Common myeloid progenitor, CD34-positive (primary cell): ENCODE measurements at regions of chr17 and their contacts with region 1.

Region 1: DNA sequence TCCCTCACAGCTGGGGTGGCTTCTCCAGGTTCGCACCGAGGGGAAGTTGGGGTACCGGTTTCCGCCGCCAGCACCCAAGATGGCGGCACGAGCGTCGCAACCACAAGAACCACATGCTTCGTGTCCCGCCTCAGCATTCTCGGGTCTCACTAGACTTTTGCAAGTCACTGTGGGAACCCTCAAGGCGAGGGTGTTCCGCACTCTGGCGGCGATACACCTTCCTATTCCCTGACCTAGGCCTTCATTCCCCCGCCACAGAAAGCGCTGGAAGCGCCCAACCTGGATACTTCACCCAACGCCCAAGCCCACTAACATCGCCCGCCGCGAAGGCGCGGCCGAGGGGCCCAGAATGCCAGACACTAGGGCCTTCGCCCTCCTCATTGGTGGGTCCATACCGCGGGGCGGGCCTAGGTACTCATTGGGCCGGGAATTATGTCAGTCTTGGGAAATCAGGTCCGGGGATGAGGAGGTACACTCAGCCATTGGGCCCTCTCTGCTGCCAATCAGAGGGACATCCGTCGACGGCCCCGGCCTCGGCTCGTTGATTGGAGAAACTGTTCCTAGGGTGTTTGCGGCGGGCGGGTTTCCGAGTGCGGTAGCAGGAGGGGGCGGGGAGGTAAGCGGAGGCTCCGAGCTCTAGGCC is at the start of gene NFE2L1:
- DNase-seq: peak; percentile 99 to 100 (median 100)
- H3K4me3 ChIP-seq: peak within 1 kb of the TSS; percentile 79 to 94 (median 84)
- H3K27ac ChIP-seq: peak within 1 kb of the TSS; percentile 88 to 94
- H3K4me1 ChIP-seq: peaks cover 7 to 54% (median 42%) of the 10 kb centered on the region in 4 experiments
- H3K27me3 ChIP-seq: no peaks in the 10 kb centered on the region

Region 2: GRCh38 chr17:48037036-48037837 is 10.6 kb before region 1 on chr17 and contains the start of gene COPZ2:
- CTCF ChIA-PET with region 1: interaction called, 12 read pairs
- POLR2A ChIA-PET with region 1: interaction called, 3 read pairs
- DNase-seq: peak; percentile 51 to 75 (median 74)
- H3K4me3 ChIP-seq: peak within 1 kb of the TSS; percentile 29 to 84 (median 60)
- H3K27ac ChIP-seq: no peak within 1 kb of the TSS
- H3K4me1 ChIP-seq: peaks cover 0 to 13% (median 11%) of the 10 kb centered on the region in 4 experiments
- H3K27me3 ChIP-seq: peaks cover 4 to 41% (median 12%) of the 10 kb centered on the region in 5 experiments

Region 3: GRCh38 chr17:48068491-48068961 is 20.7 kb after region 1 on chr17:
- CTCF ChIA-PET with region 1: interaction called, 19 read pairs
- POLR2A ChIA-PET with region 1: no interaction called
- DNase-seq: peak; percentile 23 to 36 (median 33)
- H3K4me3 ChIP-seq: no peak overlapping the region
- H3K27ac ChIP-seq: no peak overlapping the region
- H3K4me1 ChIP-seq: no peaks in the 10 kb centered on the region
- H3K27me3 ChIP-seq: no peaks in the 10 kb centered on the region